ENCODE measurements at regions of chr5 and their contacts with region 1.

Region 1: DNA sequence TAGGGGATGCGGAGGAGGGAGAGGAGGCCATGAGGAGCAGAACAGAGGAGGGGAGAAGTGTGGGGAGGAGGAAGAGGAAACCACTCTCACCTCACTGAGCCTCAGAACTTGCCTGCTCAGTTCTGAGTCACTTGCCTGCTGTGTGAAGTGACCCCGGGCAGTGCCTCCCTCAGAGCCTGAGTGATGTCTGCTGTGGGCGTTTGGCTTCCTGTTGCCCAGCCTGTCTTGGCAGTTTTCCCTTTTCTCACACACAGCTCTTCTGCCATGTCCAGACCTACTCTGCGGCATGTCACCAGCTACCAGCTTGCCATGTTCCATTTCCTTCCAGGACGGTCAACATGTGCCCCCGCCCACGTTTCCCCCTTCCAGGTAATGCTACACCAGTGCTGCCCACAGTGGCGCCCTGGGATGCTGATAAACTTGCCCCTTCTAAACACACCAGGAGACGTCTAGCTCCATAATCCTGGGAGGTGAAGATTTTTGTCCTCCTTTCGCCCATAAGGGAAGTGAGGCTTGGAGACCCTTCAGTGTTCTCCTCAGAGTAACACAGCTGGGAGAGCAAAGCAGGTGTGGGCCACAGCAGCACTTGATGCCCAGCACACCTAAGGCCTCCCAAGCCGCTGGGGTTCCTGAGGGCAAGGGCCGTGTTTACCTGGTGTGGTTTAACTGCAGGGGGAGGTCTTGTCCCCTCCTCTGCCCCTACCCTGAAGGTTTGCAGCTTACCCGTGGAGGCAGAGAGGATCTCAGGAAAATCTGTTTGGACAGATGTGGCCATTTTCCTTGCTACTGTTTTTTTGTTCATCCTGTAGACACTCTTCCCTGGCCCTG is 63.8 kb upstream of the RNF130 start:
- DNase-seq: peak; percentile 79 to 80
- H3K4me3 ChIP-seq: no peak overlapping the region
- H3K27ac ChIP-seq: no peak overlapping the region
- H3K4me1 ChIP-seq: peaks cover 14% of the 10 kb centered on the region
- H3K27me3 ChIP-seq: peaks cover 6% of the 10 kb centered on the region
- CTCF ChIP-seq: no peak

Region 2: GRCh38 chr5:180170106-180170809 is 34.9 kb after region 1 on chr5:
- CTCF ChIA-PET with region 1: interaction called, 18 read pairs
- POLR2A ChIA-PET with region 1: no interaction called
- intact Hi-C with region 1: no loop called
- DNase-seq: no peak
- H3K4me3 ChIP-seq: no peak overlapping the region
- H3K27ac ChIP-seq: no peak overlapping the region
- H3K4me1 ChIP-seq: no peaks in the 10 kb centered on the region
- H3K27me3 ChIP-seq: peaks cover 18% of the 10 kb centered on the region
- CTCF ChIP-seq: no peak

Region 3: GRCh38 chr5:180563994-180564393 is 428.7 kb after region 1 on chr5:
- CTCF ChIA-PET with region 1: no interaction called
- POLR2A ChIA-PET with region 1: interaction called, 10 read pairs
- intact Hi-C with region 1: no loop called
- DNase-seq: no peak
- H3K4me3 ChIP-seq: no peak overlapping the region
- H3K27ac ChIP-seq: no peak overlapping the region
- H3K4me1 ChIP-seq: no peaks in the 10 kb centered on the region
- H3K27me3 ChIP-seq: no peaks in the 10 kb centered on the region
- CTCF ChIP-seq: no peak

Measured in PC-9 (cell line).